AG04449 (cell line): ENCODE measurements at regions of chr15 and their contacts with region 1.

Region 1: DNA sequence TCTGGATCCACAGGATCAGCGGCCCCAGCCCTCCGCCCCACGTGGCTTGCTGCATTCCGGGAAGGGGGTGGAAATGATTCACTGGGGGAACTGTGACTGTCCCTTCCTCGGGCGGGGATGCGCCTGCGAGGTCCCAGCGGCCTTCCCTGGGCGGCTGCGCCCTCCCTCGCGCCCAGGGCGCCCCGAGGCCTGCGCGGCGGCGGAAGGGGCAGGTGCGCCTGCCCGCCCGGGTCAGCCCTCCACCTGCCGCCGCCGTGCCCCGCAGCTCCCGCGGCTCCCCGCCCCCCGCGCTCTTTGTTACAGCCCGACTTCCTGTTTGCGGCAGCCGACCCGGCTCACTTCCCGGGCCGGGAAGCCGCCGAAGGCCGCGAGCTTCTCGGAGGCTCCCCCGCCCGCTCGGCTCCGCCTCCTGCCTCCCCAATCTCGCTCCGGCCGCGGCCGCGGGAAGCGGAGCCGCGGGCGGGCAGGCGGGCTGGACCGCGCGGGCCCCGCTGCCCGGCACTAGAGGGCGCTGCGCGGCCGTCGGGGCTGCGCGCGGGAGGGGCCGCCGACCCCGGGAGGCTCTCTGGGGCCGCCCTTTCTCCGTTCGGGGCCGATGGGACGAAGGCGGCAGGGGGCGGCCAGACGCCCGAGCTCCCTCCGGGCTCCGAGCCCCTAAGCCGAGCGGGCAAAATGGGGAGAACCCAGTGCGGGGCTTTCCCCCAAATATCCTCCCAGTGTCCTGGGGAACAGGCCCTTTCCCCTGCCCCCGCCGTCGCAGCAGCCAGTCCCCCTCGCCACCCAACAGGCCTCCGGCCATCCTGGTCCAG is 11.5 kb upstream of the CHAC1 start:
- DNase-seq: no peak
- H3K4me3 ChIP-seq: peak overlapping the region; percentile 59
- CTCF ChIP-seq: peak; percentile 39

Region 2: DNA sequence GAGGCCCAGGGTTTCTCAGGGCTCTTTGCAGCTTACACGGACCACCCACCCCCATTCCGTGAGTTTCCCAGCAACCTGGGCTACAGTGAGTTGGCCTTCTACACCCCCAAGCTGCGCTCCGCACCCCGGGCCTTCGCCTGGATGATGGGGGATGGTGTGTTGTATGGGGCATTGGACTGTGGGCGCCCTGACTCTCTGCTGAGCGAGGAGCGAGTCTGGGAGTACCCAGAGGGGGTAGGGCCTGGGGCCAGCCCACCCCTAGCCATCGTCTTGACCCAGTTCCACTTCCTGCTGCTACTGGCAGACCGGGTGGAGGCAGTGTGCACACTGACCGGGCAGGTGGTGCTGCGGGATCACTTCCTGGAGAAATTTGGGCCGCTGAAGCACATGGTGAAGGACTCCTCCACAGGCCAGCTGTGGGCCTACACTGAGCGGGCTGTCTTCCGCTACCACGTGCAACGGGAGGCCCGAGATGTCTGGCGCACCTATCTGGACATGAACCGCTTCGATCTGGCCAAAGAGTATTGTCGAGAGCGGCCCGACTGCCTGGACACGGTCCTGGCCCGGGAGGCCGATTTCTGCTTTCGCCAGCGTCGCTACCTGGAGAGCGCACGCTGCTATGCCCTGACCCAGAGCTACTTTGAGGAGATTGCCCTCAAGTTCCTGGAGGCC is 42.1 kb before region 1 on chr15:
- CTCF ChIA-PET with region 1: interaction called, 53 read pairs
- POLR2A ChIA-PET with region 1: no interaction called
- DNase-seq: no peak
- H3K4me3 ChIP-seq: no peak overlapping the region
- CTCF ChIP-seq: no peak

Region 3: DNA sequence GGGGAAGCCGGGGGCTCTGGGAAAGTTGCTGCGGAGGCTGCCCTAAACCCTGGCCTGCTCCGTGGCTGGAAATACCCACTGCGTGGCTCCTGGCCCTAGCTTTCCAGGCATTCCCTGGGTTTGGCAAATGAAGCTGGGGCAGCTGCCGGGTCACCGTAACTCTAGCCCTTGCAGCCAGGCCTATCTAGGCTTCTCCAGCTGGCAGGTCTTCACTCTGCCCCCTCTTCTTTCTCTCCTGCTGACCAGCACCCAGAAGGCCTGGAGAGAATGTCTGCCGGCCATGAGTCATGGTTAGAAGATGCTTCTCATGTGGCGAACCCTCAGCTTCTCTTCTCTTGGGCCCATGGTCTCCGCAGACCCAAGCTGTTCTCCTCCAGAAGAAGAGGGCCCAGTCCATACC is 18.2 kb before region 1 on chr15:
- CTCF ChIA-PET with region 1: interaction called, 78 read pairs
- POLR2A ChIA-PET with region 1: no interaction called
- DNase-seq: no peak
- H3K4me3 ChIP-seq: no peak overlapping the region
- CTCF ChIP-seq: no peak

Region 4: GRCh38 chr15:40960926-40961325 is 19.2 kb after region 1 on chr15:
- CTCF ChIA-PET with region 1: interaction called, 28 read pairs
- POLR2A ChIA-PET with region 1: interaction called, 6 read pairs
- DNase-seq: no peak
- H3K4me3 ChIP-seq: no peak overlapping the region
- CTCF ChIP-seq: no peak

Region 5: GRCh38 chr15:41006479-41006878 is 64.7 kb after region 1 on chr15:
- CTCF ChIA-PET with region 1: interaction called, 22 read pairs
- POLR2A ChIA-PET with region 1: no interaction called
- DNase-seq: no peak
- H3K4me3 ChIP-seq: no peak overlapping the region
- CTCF ChIP-seq: no peak

Region 6: GRCh38 chr15:41183581-41183980 is 241.8 kb after region 1 on chr15:
- CTCF ChIA-PET with region 1: interaction called, 11 read pairs
- POLR2A ChIA-PET with region 1: no interaction called
- DNase-seq: no peak
- H3K4me3 ChIP-seq: no peak overlapping the region
- CTCF ChIP-seq: no peak